Activated B cell treated with CpG ODN at 0.5 μM for 24 hours (primary cell): ENCODE measurements at regions of chr11 and their contacts with region 1.

Region 1: DNA sequence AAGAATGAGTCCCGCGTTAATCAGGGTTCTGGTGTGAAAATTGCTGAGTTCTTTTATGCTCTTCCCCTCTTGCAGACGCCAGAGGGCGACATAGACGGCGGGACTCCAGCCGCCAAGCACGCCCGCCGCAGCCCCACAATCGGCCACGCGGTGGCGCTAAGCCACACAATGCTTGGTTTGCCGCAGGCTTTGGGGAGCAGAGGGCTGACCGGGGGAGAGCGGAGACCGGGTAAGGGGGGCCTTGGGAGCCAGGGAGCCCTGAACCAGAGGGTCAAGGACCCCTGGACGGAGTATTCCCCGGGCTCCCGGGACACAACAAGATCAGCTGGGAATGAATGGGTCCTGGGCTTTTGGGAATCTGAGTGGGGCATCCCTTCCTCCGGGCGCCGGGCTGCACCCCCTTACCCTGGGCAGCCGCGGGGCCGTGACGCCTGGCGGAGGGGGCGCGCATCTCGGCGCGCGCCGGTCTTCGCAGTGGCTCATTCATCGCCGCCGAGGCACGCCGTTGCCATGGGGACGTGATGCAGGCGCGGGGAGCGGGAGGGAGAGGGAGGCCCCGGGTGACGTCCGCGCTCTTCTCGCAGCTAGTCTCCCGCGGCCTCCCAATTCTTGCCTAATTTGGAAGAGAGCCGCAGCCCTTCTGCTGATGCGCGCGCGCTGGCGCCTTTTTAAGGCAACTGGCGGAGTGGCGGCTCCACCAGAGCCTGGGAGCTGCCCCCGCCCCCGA is 12.2 kb upstream of the NPAS4 start:
- DNase-seq: peak; percentile 88
- ATAC-seq: peak; percentile 92
- H3K4me3 Mint-ChIP-seq: peak overlapping the region; percentile 73
- H3K27ac Mint-ChIP-seq: no peak overlapping the region
- H3K4me1 Mint-ChIP-seq: peaks cover 4% of the 10 kb centered on the region
- H3K27me3 Mint-ChIP-seq: peaks cover 44% of the 10 kb centered on the region
- CTCF ChIP-seq: peak; percentile 96

Region 2: GRCh38 chr11:66363805-66364535 is 44.7 kb before region 1 on chr11:
- CTCF ChIA-PET with region 1: no interaction called
- POLR2A ChIA-PET with region 1: no interaction called
- intact Hi-C with region 1: no loop called
- DNase-seq: peak; percentile 45
- ATAC-seq: peak; percentile 64
- H3K4me3 Mint-ChIP-seq: no peak overlapping the region
- H3K27ac Mint-ChIP-seq: no peak overlapping the region
- H3K4me1 Mint-ChIP-seq: no peaks in the 10 kb centered on the region
- H3K27me3 Mint-ChIP-seq: no peaks in the 10 kb centered on the region
- CTCF ChIP-seq: no peak

Region 3: GRCh38 chr11:66386171-66387069 is 22.2 kb before region 1 on chr11:
- CTCF ChIA-PET with region 1: interaction called, 12 read pairs
- POLR2A ChIA-PET with region 1: no interaction called
- intact Hi-C with region 1: no loop called
- DNase-seq: peak; percentile 68
- ATAC-seq: peak; percentile 84
- H3K4me3 Mint-ChIP-seq: peak overlapping the region; percentile 17
- H3K27ac Mint-ChIP-seq: no peak overlapping the region
- H3K4me1 Mint-ChIP-seq: peaks cover 9% of the 10 kb centered on the region
- H3K27me3 Mint-ChIP-seq: no peaks in the 10 kb centered on the region
- CTCF ChIP-seq: no peak

Region 4: GRCh38 chr11:66429983-66430602 is 21.4 kb after region 1 on chr11:
- CTCF ChIA-PET with region 1: interaction called, 5 read pairs
- POLR2A ChIA-PET with region 1: interaction called, 3 read pairs
- intact Hi-C with region 1: loop called (anchors 1 kb)
- DNase-seq: peak; percentile 44
- ATAC-seq: peak; percentile 70
- H3K4me3 Mint-ChIP-seq: no peak overlapping the region
- H3K27ac Mint-ChIP-seq: no peak overlapping the region
- H3K4me1 Mint-ChIP-seq: no peaks in the 10 kb centered on the region
- H3K27me3 Mint-ChIP-seq: no peaks in the 10 kb centered on the region
- CTCF ChIP-seq: no peak

Region 5: GRCh38 chr11:66545701-66546367 is 137.2 kb after region 1 on chr11 and contains the start of gene ZDHHC24:
- CTCF ChIA-PET with region 1: no interaction called
- POLR2A ChIA-PET with region 1: no interaction called
- intact Hi-C with region 1: loop called (anchors 1 kb)
- DNase-seq: peak; percentile 86
- ATAC-seq: peak; percentile 85
- H3K4me3 Mint-ChIP-seq: peak within 1 kb of the TSS; percentile 77
- H3K27ac Mint-ChIP-seq: peak within 1 kb of the TSS; percentile 57
- H3K4me1 Mint-ChIP-seq: peaks cover 35% of the 10 kb centered on the region
- H3K27me3 Mint-ChIP-seq: no peaks in the 10 kb centered on the region
- CTCF ChIP-seq: no peak
- total RNA-seq, gene ZDHHC24: 14.6 and 19.0 TPM in 2 replicates

Region 6: GRCh38 chr11:66835768-66836405 is 427.2 kb after region 1 on chr11:
- CTCF ChIA-PET with region 1: no interaction called
- POLR2A ChIA-PET with region 1: no interaction called
- intact Hi-C with region 1: loop called (anchors 1 kb)
- DNase-seq: no peak
- ATAC-seq: no peak
- H3K4me3 Mint-ChIP-seq: no peak overlapping the region
- H3K27ac Mint-ChIP-seq: peak overlapping the region; percentile 5
- H3K4me1 Mint-ChIP-seq: peaks cover 31% of the 10 kb centered on the region
- H3K27me3 Mint-ChIP-seq: no peaks in the 10 kb centered on the region
- CTCF ChIP-seq: no peak